Caco-2 (cell line): ENCODE measurements at regions of chr7 and their contacts with region 1.

Region 1: DNA sequence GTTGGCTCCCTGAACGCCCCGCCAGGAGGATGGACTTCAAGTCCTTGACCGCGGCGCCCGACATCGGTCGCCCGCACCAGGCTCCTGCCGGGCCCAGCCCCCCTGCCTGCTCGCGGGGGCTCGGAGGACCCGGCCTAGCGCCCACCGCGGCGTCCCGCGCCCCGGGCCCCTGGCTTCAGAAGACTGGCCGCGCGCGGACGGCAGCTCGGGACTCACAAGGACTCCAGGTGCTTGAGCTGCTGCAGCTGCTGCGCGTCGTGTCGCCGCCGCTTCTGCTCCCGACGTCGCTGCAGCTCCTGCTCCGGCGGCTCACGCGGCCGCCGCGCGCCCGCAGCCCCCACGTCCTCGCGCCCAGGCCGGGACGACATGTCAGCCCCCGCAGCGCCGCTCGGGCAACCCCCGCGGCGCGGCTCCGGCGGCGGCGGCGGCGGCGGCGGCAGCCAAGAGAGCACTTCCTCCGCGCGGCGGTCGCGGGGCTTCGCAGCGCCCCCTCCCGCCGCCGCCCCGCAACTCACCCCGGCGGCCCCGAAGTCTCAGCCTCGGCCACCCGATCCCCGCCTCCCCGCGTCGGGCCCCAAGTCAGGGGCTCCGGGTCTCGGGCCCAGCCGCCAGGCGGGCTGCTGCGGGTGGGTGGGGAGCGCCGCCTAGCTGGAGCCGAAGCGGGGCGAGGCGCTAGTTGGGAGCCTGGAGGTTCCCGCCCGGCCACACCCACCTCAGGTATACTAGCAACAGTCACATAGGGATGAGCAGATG is at the start of gene RP9:
- DNase-seq: peak; percentile 84 to 91
- H3K4me3 ChIP-seq: peak within 1 kb of the TSS; percentile 87
- H3K4me3 Mint-ChIP-seq: peak within 1 kb of the TSS; percentile 83
- H3K27ac Mint-ChIP-seq: peak within 1 kb of the TSS; percentile 63
- H3K4me1 ChIP-seq: peaks cover 4% of the 10 kb centered on the region
- H3K4me1 Mint-ChIP-seq: peaks cover 7% of the 10 kb centered on the region
- H3K27me3 ChIP-seq: no peaks in the 10 kb centered on the region; the same call in 1 of the 2 replicates
- H3K27me3 Mint-ChIP-seq: peaks cover 10% of the 10 kb centered on the region
- CTCF ChIP-seq: peak; percentile 61 to 65
- total RNA-seq, gene RP9: 20.3 and 22.2 TPM in 2 replicates

Region 2: GRCh38 chr7:32765185-32765584 is 344.0 kb before region 1 on chr7:
- CTCF ChIA-PET with region 1: no interaction called
- POLR2A ChIA-PET with region 1: no interaction called
- intact Hi-C with region 1: loop called (anchors 1 kb)
- DNase-seq: no peak
- H3K4me3 ChIP-seq: no peak overlapping the region
- H3K4me3 Mint-ChIP-seq: no peak overlapping the region
- H3K27ac Mint-ChIP-seq: no peak overlapping the region
- H3K4me1 ChIP-seq: no peaks in the 10 kb centered on the region
- H3K4me1 Mint-ChIP-seq: no peaks in the 10 kb centered on the region
- H3K27me3 ChIP-seq: no peaks in the 10 kb centered on the region
- H3K27me3 Mint-ChIP-seq: peaks cover 6% of the 10 kb centered on the region
- CTCF ChIP-seq: no peak

Region 3: GRCh38 chr7:32846701-32847100 is 262.5 kb before region 1 on chr7:
- CTCF ChIA-PET with region 1: interaction called, 20 read pairs
- POLR2A ChIA-PET with region 1: no interaction called
- intact Hi-C with region 1: loop called (anchors 1 kb)
- DNase-seq: peak; percentile 87 to 91
- H3K4me3 ChIP-seq: no peak overlapping the region
- H3K4me3 Mint-ChIP-seq: no peak overlapping the region
- H3K27ac Mint-ChIP-seq: no peak overlapping the region
- H3K4me1 ChIP-seq: no peaks in the 10 kb centered on the region; the same call in 1 of the 2 replicates
- H3K4me1 Mint-ChIP-seq: peaks cover 7% of the 10 kb centered on the region
- H3K27me3 ChIP-seq: no peaks in the 10 kb centered on the region
- H3K27me3 Mint-ChIP-seq: peaks cover 3% of the 10 kb centered on the region
- CTCF ChIP-seq: peak; percentile 89 to 94

Region 4: GRCh38 chr7:32957326-32958045 is 151.7 kb before region 1 on chr7 and contains the start of gene FKBP9:
- CTCF ChIA-PET with region 1: no interaction called
- POLR2A ChIA-PET with region 1: no interaction called
- intact Hi-C with region 1: loop called (anchors 5 kb)
- DNase-seq: peak; percentile 86 to 93
- H3K4me3 ChIP-seq: peak within 1 kb of the TSS; percentile 95
- H3K4me3 Mint-ChIP-seq: peak within 1 kb of the TSS; percentile 82
- H3K27ac Mint-ChIP-seq: peak within 1 kb of the TSS; percentile 55
- H3K4me1 ChIP-seq: 0 out of 2 replicates have a peak, but pooled peaks cover 6% of the 10 kb centered on the region
- H3K4me1 Mint-ChIP-seq: no peaks in the 10 kb centered on the region
- H3K27me3 ChIP-seq: no peaks in the 10 kb centered on the region
- H3K27me3 Mint-ChIP-seq: no peaks in the 10 kb centered on the region
- CTCF ChIP-seq: no peak
- total RNA-seq, gene FKBP9: 74.3 and 82.6 TPM in 2 replicates

Region 5: DNA sequence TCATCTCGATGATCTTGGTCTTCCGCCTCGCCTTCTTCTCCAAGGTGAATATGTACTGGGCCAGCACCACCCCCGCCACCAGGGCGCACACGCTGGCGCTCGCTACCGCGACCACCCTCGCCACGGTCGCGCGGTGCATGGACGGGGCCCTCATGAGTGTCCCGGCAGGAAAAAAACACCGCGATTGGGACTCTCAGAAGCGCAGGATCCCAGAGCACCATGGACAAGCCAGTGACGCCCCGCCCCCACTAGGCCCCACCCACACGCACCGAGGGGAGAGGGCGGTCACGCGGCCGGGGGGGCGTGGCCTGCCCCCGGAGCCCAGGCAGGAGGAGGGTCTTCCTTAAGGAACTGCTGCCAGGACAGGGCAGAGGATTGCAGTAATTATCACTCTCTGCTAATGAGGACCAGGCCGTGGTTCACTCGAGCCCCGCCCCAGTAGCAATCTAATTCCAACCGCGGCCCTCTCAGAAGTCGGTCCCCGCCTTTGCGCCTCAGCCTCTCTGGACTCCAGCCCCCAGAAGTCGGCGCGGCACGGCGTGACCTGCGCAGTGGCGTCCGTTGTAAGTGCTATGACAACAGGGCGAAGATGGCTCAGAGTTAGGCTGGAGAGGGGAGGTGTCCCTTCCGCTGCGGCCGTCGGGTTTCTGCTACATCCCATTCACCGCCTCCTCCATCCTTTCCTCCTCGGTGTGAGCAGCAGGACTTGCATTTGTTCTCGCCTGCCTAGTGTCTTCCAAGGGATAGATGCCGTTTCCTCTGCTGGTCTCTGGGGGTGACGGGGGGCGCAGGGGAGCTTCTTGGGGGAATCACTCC is 20.0 kb after region 1 on chr7 and contains the start of gene BBS9:
- CTCF ChIA-PET with region 1: interaction called, 3 read pairs
- POLR2A ChIA-PET with region 1: no interaction called
- intact Hi-C with region 1: loop called (anchors 1 kb)
- DNase-seq: peak; percentile 92 to 94
- H3K4me3 ChIP-seq: peak within 1 kb of the TSS; percentile 97
- H3K4me3 Mint-ChIP-seq: peak within 1 kb of the TSS; percentile 92
- H3K27ac Mint-ChIP-seq: peak within 1 kb of the TSS; percentile 85
- H3K4me1 ChIP-seq: no peaks in the 10 kb centered on the region
- H3K4me1 Mint-ChIP-seq: no peaks in the 10 kb centered on the region
- H3K27me3 ChIP-seq: no peaks in the 10 kb centered on the region
- H3K27me3 Mint-ChIP-seq: peaks cover 3% of the 10 kb centered on the region
- CTCF ChIP-seq: no peak
- total RNA-seq, gene BBS9: 4.7 and 5.6 TPM in 2 replicates